Activated CD4-positive, alpha-beta memory T cell treated with anti-CD3 and anti-CD28 coated beads, Interleukin-2, amount 10 ng/mL, durations not matched to agents 7 days and 5 days (primary cell): ENCODE measurements at regions of chr3 and their contacts with region 1.

Region 1: DNA sequence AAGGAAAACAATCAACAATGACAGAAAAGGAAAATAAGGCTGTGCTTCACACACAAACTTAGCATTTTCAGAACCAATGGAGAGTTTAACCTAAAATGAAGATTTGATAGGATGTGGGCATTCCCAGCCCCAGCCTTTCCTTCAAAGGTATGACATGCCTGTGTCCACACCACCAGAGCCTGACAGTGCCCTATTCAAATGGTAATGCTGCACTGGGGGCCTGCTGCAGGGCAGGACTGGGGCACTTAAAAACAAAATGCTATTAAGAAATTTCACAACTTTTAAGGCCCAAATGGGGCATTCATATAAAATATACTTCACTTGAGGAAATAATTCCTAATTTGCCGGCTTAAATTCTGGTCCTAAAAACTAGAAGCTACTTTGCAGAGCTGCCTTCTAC is 30.9 kb upstream of the TKT start:
- DNase-seq: no peak
- H3K4me3 Mint-ChIP-seq: no peak overlapping the region
- H3K27ac Mint-ChIP-seq: no peak overlapping the region
- H3K4me1 Mint-ChIP-seq: no peaks in the 10 kb centered on the region
- H3K27me3 Mint-ChIP-seq: no peaks in the 10 kb centered on the region

Region 2: DNA sequence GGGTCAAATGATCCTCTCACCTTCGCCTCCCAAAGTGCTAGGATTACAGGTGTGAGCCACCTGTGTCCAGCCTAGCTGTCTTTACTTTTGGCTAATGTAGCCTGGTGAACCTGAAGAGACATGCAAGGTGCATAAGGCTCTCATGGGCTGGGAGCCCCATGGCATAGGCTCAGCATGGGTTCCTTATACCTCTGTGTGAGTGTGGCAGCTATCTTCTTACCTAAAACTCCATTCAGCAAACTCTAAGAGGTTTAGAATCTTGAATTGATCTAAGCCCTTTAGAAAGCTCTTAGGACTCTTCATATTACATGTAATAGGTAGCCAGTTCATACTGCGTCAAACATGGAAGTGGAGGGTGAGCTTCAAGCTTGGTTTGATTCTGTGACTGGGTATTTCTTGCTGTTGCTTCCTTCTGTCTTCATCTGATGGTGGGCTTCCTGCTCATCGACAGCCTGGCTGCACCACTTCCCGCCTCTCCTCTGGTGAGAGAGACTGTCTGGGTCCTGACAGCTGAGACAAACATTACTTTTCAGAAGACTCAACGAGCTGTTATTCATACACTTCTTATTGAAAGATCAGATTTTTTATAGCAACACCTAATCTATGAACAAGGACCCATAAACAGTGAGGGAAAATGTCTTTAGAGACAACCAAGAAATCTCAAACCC is 11.7 kb before region 1 on chr3:
- CTCF ChIA-PET with region 1: interaction called, 4 read pairs
- POLR2A ChIA-PET with region 1: interaction called, 11 read pairs
- DNase-seq: no peak
- H3K4me3 Mint-ChIP-seq: no peak overlapping the region
- H3K27ac Mint-ChIP-seq: no peak overlapping the region
- H3K4me1 Mint-ChIP-seq: peaks cover 9% of the 10 kb centered on the region
- H3K27me3 Mint-ChIP-seq: no peaks in the 10 kb centered on the region